ENCODE measurements at regions of chr11 and their contacts with region 1.

Region 1: DNA sequence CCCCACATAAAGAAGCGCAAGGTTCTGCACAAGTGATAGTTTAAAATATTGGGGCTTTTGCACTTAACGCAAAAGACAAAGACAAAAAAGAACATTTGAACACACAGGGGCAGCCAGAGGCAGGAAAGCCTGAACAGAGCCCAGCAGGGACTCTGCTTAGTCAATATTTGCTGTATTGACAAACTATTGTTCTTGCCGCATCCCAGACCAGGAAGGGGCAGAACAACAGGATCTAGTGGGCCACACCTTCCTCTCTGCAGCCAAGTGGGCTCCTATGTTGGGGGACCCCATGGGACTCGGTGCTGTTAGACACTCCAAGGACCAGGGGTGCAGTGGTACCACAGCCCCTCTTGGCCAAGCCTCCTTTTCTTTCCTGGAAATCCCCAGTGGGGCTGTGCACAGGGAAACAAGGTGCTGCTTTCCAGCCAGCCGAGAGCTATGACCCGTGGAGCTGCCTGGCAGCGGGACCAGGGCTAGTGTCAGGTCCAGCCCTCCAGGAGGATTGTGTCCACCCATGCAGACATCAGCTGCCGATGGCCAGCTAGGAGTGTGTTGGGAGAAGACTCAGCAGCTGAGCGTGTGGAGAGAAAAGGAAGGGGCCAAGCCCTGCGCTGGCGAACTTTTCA is 43.3 kb upstream of the ANO1 start:
- DNase-seq: no peak
- H3K4me3 Mint-ChIP-seq: no peak overlapping the region
- H3K27ac Mint-ChIP-seq: no peak overlapping the region
- H3K4me1 Mint-ChIP-seq: no peaks in the 10 kb centered on the region
- H3K27me3 Mint-ChIP-seq: no peaks in the 10 kb centered on the region
- CTCF ChIP-seq: no peak

Region 2: GRCh38 chr11:70111269-70112016 is 76.6 kb after region 1 on chr11:
- CTCF ChIA-PET with region 1: no interaction called
- POLR2A ChIA-PET with region 1: no interaction called
- intact Hi-C with region 1: loop called (anchors 2 kb)
- DNase-seq: peak; percentile 8
- H3K4me3 Mint-ChIP-seq: no peak overlapping the region
- H3K27ac Mint-ChIP-seq: no peak overlapping the region
- H3K4me1 Mint-ChIP-seq: no peaks in the 10 kb centered on the region
- H3K27me3 Mint-ChIP-seq: peaks cover 10% of the 10 kb centered on the region
- CTCF ChIP-seq: no peak

Measured in MCF 10A (cell line).